PC-9 (cell line): ENCODE measurements at regions of chr5 and their contacts with region 1.

Region 1: DNA sequence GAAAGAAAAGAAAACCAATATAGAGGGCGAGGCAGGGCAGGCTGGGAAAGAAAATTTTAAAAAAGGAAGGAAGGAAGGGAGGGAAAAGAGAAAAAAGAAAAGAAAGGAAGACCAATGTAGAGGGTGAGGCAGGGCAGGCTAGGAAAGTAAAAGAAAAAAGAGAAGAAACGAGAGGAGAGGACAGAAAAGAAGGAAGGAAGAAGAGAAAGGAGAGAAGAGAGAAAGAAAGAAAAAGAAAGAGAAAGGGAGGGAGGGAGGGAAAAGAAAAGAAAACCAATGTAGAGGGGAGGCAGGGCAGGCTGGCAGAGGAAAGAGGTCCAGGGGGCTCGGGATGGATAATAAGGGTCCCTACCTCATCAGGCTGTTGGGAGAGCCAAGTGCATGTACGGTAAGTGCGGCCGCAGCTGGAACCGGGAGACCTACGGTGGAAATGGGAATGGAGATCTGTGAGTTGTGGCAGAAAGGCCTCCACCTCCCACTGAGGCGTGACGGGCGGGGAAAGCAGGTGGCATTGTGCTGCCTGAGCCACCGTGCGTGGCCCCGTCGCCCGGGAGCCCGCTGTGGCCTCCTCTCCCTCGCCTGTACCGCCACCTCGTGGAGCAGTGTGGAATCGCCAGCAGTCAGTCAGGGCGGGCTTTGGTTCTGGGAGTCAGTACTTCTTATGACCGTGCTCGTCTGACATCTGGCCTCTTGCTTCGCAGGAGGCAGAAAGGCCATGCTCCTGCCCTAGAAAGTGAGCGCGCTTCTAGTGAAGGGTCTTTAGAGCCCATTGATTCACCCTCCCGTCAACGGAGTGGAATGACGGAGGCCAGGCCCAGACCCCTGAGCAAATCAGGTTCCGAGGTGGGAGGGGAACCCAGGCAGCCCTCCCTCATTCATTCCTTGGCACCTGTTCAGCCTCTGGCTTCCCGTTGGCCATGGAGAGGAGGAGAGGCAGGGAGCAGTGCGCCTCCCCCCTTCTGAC is 10.4 kb upstream of the NHP2 start:
- DNase-seq: peak; percentile 70 to 89
- H3K4me3 ChIP-seq: no peak overlapping the region
- H3K27ac ChIP-seq: no peak overlapping the region
- H3K4me1 ChIP-seq: no peaks in the 10 kb centered on the region
- H3K27me3 ChIP-seq: no peaks in the 10 kb centered on the region; the same call in 1 of the 2 replicates
- CTCF ChIP-seq: peak; percentile 96

Region 2: GRCh38 chr5:178204182-178204894 is 40.3 kb after region 1 on chr5 and contains the start of gene HNRNPAB:
- CTCF ChIA-PET with region 1: no interaction called
- POLR2A ChIA-PET with region 1: no interaction called
- intact Hi-C with region 1: loop called (anchors 5 kb)
- DNase-seq: peak; percentile 80 to 97
- H3K4me3 ChIP-seq: peak within 1 kb of the TSS; percentile 85
- H3K27ac ChIP-seq: peak within 1 kb of the TSS; percentile 63
- H3K4me1 ChIP-seq: peaks cover 31% of the 10 kb centered on the region
- H3K27me3 ChIP-seq: no peaks in the 10 kb centered on the region
- CTCF ChIP-seq: no peak
- total RNA-seq, gene HNRNPAB: 171 and 193 TPM in 2 replicates